ENCODE measurements at regions of chr16 and their contacts with region 1.

Region 1: GRCh38 chr16:68448360-68448970 is at the start of gene SMPD3:
- DNase-seq: peak; percentile 99
- CTCF ChIP-seq: no peak

Region 2: DNA sequence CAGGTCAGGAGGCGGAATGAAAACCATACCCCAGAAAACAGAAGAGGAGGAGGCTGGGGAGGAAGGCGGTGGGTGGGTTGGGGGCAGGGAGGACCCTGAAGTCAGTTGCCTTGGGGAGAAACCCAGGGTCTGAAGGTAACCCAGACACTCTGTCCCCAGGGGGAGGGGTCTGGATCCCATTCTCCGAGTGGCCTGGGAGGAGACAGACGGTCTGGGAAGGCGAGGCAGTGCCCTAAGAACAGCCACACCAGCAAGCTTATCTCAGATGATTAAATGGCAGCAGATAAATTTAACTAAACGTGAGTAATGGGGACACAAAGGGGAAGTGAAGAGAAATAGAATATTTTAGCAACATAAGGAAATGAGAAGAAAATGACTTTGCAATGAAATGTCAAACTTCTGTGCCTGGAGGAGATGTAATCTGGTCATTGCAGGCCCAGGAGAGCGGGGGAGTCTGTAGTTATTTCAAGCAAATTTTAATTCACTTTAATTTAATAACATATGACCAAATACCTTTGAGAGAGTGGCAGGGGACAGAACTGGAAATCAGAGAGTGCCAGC is 69.2 kb after region 1 on chr16:
- in situ Hi-C with region 1: loop called (anchors 5 kb)
- DNase-seq: no peak
- CTCF ChIP-seq: no peak

Region 3: GRCh38 chr16:68564367-68564985 is 116.0 kb after region 1 on chr16:
- in situ Hi-C with region 1: no loop called
- DNase-seq: no peak
- CTCF ChIP-seq: no peak

Region 4: GRCh38 chr16:68910051-68910450 is 461.6 kb after region 1 on chr16:
- in situ Hi-C with region 1: no loop called
- DNase-seq: no peak
- CTCF ChIP-seq: no peak

Measured in GM13977 (cell line).